Left ventricle myocardium superior (tissue), 1 donor: ENCODE measurements at regions of chr4 and their contacts with region 1.

Region 1: DNA sequence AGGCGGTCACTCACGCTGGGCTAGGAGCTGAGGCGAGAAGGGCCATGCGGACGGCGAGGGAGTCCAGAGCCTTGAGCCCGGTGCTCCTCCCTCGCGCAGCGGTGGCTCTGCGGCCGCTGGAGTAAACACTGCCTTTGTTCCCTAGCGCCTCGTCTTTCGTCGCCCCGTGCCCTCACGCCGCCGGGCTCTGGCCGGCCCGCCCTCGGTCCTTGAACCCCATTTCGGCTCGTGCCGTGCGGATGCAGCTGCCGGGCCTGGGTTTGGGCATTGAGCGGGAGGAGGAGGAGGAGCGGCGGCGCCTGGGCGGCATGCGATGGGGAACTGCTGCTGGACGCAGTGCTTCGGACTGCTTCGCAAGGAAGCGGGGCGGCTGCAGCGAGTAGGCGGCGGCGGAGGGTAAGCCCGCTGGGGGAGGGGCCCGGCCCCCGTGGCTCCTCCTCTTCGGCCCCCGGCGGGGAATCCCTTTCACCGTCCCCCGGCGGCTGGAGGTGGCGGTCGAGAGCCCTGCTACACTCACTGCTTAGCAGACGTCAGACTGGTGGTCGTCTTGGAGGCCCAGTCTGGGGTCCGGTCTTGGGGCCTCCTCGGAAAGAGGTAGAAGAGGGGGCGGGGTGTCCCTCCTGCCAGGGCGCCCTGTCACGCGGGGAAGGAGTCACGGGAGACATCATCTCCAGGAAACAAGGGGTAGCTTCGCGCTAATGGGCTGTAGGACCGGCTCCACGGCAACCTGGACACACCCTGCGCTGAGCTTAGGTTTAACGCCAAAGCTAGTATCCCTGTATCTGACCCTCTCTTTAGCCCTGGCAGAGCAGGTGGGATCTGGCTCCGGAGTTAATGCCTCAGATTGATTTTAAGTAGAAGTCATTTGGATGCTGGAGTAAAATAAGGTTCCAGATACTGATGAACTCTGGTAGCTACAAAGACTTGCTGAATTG is at the start of gene AP1AR:
- DNase-seq: peak; percentile 89
- ATAC-seq: peak; percentile 87
- total RNA-seq, gene AP1AR: 10.2 TPM

Region 2: DNA sequence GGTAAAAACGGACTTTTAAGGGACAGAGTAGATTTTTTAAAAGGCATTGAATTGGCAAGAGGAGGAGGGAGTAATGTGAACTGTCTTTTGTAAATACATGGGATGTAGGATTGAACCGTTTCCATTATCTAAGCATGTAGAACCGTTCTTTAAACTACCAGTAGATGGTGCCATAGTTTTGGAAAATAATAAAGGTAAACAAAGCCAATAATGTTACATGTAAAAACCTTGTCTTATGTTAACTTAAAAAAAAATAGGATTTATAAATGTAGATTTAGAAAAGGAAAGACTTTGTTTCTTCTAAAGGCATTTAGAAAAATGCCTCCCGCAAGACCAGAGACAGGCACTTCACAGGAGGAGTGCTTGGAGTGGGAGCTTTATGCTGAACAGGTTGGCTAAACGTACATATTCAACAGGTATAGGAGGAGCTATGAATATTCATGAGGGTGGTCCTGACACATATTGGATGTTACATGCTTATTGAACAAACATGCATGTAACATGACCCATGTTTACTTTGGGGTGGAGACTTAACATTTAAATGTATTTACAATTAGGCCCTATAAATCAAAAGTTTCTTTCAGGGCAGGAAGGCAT is 132.2 kb before region 1 on chr4:
- intact Hi-C with region 1: loop called (anchors 1 kb)
- DNase-seq: no peak
- ATAC-seq: peak; percentile 77

Region 3: DNA sequence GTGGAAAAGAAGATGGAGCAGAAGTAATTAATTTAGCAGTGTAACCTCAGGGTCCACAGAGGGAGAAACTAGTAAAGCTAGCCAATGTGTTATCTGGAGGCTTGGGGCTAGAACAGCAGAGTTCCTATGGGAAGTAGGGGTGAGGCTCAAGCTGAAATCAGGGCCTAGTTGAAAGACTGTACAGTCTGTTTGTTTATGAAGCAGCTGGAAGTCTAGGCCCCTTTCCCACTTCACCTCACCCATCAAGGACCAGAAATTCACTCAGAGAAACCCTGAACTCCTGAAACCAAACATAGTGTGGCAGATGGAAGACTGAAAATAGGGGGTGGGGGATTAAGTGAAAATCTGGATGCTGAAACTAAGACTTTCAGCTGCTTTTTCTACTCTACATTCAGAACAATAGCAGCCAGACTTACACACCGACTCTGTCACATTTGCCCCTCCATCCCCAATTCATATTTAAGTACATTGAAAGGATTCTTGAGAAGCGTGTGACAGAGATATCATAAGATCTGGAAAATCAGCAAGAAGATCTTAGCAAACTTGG is 119.4 kb before region 1 on chr4:
- intact Hi-C with region 1: no loop called
- DNase-seq: no peak
- ATAC-seq: no peak

Region 4: DNA sequence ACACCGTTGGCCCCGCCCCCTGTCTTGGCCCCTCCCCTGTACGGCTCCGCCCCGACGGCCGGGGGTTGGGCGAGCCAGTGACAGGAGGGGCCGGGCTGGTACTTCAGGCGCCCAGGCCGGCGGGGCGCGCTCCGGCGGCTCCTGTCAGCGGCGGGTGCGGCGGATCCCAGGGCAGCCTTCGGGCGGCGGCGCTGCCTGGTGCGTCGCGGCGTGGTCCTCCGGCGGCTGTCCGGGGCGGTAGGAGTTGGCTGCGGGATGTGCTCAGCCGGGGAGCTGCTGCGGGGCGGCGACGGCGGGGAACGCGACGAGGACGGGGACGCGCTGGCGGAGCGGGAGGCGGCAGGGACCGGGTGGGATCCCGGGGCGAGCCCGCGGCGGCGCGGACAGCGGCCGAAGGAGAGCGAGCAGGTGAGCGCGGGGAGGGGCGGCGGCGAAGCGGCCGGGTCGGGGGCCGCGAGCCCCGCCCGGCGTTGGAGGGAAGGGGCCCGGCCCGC is 86.7 kb before region 1 on chr4 and contains the start of gene FAM241A:
- intact Hi-C with region 1: loop called (anchors 10 kb)
- DNase-seq: peak; percentile 94
- ATAC-seq: peak; percentile 98
- total RNA-seq, gene FAM241A: 11.3 TPM

Region 5: GRCh38 chr4:112270640-112271393 is 38.8 kb after region 1 on chr4:
- intact Hi-C with region 1: no loop called
- DNase-seq: no peak
- ATAC-seq: no peak

Region 6: GRCh38 chr4:112616984-112617383 is 384.9 kb after region 1 on chr4:
- intact Hi-C with region 1: no loop called
- DNase-seq: no peak
- ATAC-seq: no peak

Region 7: DNA sequence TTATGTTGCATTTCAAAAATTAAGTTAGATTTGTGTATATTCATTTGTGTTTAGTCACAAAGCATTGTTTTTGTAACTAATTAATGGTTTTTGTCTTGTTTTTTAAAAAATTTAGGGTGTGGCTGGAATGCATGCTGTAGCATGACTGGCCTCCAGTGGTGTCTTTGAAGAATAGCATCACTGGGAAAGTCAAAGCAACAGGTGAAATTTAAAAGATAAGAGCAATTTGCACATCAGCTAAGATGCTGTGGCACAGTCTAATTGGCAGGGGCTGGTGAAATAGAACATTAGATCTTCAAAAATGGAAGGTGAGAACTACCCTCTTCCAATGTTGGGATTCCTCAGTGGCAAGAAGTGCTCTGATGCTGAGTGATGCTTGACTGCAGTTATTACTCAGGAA is 862.8 kb after region 1 on chr4:
- intact Hi-C with region 1: no loop called
- DNase-seq: no peak
- ATAC-seq: no peak